HCT116 (cell line): ENCODE measurements at regions of chr2 and their contacts with region 1.

Region 1: DNA sequence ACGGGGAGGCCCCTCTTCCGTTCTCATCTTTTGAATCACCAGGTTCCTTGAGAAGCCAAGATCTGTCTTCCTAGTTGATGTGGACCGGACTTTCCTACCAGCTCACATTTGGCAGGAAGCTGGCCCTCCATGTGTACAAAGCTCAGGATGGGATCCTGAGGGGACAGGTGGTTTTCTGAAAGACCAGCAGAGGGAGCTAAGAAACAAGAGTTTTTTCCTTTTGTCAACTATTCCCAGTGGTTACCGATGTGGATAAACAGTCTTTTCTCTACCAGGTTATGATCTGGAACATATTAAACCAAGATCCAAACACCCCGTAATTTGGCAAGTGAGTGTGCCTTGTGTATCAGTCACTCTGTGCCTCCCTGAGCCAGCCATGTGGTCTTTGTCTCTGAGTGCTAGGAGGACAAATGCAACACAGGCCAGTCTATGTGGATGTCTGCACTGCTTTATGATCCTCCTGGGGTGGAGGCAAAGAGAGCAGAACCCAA is 25.1 kb upstream of the ARHGAP25 start:
- DNase-seq: peak; percentile 45
- ATAC-seq: peak; percentile 98
- H3K4me3 ChIP-seq: no peak overlapping the region
- H3K27ac ChIP-seq: no peak overlapping the region
- H3K4me1 ChIP-seq: no peaks in the 10 kb centered on the region
- H3K27me3 ChIP-seq: no peaks in the 10 kb centered on the region
- CTCF ChIP-seq: peak; percentile 63 to 78 (median 77)
- POLR2A ChIP-seq: no peak
- RAD21 ChIP-seq: peak; percentile 77

Region 2: DNA sequence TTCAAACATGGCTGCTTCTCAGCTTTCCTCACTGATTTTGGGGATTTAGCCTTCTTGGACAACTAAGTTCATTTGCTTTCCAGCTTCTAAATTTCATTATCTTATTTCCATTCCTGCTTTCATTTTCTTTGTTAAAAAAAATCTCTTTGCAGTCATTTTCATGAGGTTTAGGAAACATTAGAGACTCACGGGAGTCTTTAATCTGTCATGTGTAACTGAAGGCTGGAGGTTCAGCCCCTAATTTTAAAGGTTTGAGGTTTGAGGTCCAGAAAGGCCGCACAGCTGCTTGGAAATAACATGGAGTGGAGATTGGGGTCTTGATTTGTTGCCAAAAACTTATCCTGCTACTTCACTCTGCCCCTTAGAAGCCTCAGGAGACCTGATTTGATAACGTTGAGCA is 35.8 kb before region 1 on chr2:
- CTCF ChIA-PET with region 1: no interaction called
- POLR2A ChIA-PET with region 1: no interaction called
- RAD21 ChIA-PET with region 1: no interaction called
- intact Hi-C with region 1: no loop called
- DNase-seq: no peak
- ATAC-seq: no peak
- H3K4me3 ChIP-seq: no peak overlapping the region
- H3K27ac ChIP-seq: no peak overlapping the region
- H3K4me1 ChIP-seq: no peaks in the 10 kb centered on the region
- H3K27me3 ChIP-seq: no peaks in the 10 kb centered on the region
- CTCF ChIP-seq: no peak
- POLR2A ChIP-seq: no peak
- RAD21 ChIP-seq: no peak

Region 3: DNA sequence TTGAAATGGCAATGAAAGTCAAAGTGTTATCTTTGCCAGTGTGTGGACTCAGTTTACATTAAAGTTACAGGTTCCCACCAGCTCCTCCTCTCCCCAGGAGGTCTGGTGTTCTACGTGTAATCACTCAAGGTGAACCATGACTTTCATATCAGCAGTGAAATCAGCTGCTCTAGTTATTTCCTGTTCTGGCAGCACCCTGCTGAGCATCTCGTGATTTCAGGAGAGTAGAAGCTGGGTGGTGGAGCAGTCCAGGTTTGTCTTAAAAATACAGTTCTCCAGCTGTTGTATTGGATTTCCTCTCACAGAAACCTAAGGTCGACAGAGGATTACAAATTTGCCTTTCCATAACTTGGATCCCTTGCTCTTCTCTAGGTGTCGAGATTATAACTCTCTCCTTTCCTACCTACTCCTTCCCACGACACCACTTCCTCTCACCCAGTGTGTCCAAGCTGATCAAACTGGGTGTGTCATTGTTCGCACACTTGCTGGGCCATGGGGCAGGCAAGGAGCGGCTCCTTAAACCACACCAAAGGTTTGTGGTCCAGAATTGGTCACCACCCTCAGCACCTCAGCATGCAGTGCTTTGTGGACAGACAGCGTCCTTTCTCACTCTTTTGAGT is 12.1 kb after region 1 on chr2:
- CTCF ChIA-PET with region 1: interaction called, 23 read pairs
- POLR2A ChIA-PET with region 1: no interaction called
- RAD21 ChIA-PET with region 1: no interaction called
- intact Hi-C with region 1: no loop called
- DNase-seq: peak; percentile 68
- ATAC-seq: peak; percentile 92
- H3K4me3 ChIP-seq: peak overlapping the region in 1 of 2 experiments; percentile 27; a peak in 3 of 4 replicates
- H3K27ac ChIP-seq: peak overlapping the region; percentile 18; the same call in 1 of the 2 replicates
- H3K4me1 ChIP-seq: peaks cover 15 to 20% of the 10 kb centered on the region in 2 experiments
- H3K27me3 ChIP-seq: peaks cover 26% of the 10 kb centered on the region
- CTCF ChIP-seq: no peak
- POLR2A ChIP-seq: no peak
- RAD21 ChIP-seq: no peak

Region 4: GRCh38 chr2:68837164-68837860 is 127.8 kb after region 1 on chr2:
- CTCF ChIA-PET with region 1: interaction called, 11 read pairs
- POLR2A ChIA-PET with region 1: no interaction called
- RAD21 ChIA-PET with region 1: no interaction called
- intact Hi-C with region 1: loop called (anchors 2 kb)
- DNase-seq: peak; percentile 58
- ATAC-seq: peak; percentile 98
- H3K4me3 ChIP-seq: no peak overlapping the region
- H3K27ac ChIP-seq: no peak overlapping the region
- H3K4me1 ChIP-seq: peaks cover 0 to 5% of the 10 kb centered on the region in 2 experiments; a peak in 1 of 4 replicates
- H3K27me3 ChIP-seq: no peaks in the 10 kb centered on the region
- CTCF ChIP-seq: peak; percentile 75 to 94 (median 89)
- POLR2A ChIP-seq: no peak
- RAD21 ChIP-seq: peak; percentile 57

Region 5: GRCh38 chr2:68909793-68910674 is 200.6 kb after region 1 on chr2:
- CTCF ChIA-PET with region 1: interaction called, 24 read pairs
- POLR2A ChIA-PET with region 1: no interaction called
- RAD21 ChIA-PET with region 1: no interaction called
- intact Hi-C with region 1: no loop called
- DNase-seq: peak; percentile 73
- ATAC-seq: peak; percentile 57
- H3K4me3 ChIP-seq: no peak overlapping the region
- H3K27ac ChIP-seq: no peak overlapping the region
- H3K4me1 ChIP-seq: peaks cover 20 to 23% of the 10 kb centered on the region in 2 experiments
- H3K27me3 ChIP-seq: no peaks in the 10 kb centered on the region
- CTCF ChIP-seq: peak; percentile 82 to 87 (median 83)
- POLR2A ChIP-seq: no peak
- RAD21 ChIP-seq: peak; percentile 85

Region 6: GRCh38 chr2:68971591-68972231 is 262.2 kb after region 1 on chr2:
- CTCF ChIA-PET with region 1: no interaction called
- POLR2A ChIA-PET with region 1: no interaction called
- RAD21 ChIA-PET with region 1: no interaction called
- intact Hi-C with region 1: no loop called
- DNase-seq: no peak
- ATAC-seq: peak; percentile 84; the same call in 1 of the 2 replicates
- H3K4me3 ChIP-seq: no peak overlapping the region
- H3K27ac ChIP-seq: no peak overlapping the region
- H3K4me1 ChIP-seq: peaks cover 0 to 14% of the 10 kb centered on the region in 2 experiments; a peak in 2 of 4 replicates
- H3K27me3 ChIP-seq: no peaks in the 10 kb centered on the region
- CTCF ChIP-seq: no peak
- POLR2A ChIP-seq: no peak
- RAD21 ChIP-seq: no peak

Region 7: DNA sequence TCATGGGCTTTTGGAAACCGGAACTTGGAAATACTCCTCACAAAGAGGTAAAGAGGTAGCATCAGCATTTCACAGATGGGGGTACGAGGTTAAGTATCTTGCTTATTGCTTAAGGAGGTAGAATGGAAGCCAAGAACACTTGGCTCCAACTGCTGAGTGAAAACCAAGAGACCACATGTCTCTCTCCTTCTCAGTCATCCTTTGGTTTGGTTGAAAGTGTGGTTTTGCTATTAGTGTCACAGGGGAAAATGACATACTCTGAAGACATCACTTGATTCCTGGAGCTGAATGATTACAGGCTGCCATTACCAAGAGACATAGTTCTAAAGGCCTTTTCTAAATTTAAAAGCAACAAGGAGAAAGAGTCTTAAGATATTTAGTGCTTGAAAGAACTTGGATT is 345.0 kb after region 1 on chr2:
- CTCF ChIA-PET with region 1: no interaction called
- POLR2A ChIA-PET with region 1: no interaction called
- RAD21 ChIA-PET with region 1: no interaction called
- intact Hi-C with region 1: no loop called
- DNase-seq: no peak
- ATAC-seq: no peak
- H3K4me3 ChIP-seq: no peak overlapping the region
- H3K27ac ChIP-seq: no peak overlapping the region
- H3K4me1 ChIP-seq: no peaks in the 10 kb centered on the region
- H3K27me3 ChIP-seq: no peaks in the 10 kb centered on the region
- CTCF ChIP-seq: no peak
- POLR2A ChIP-seq: no peak
- RAD21 ChIP-seq: no peak